ENCODE measurements at regions of chr7 and their contacts with region 1.

Region 1: DNA sequence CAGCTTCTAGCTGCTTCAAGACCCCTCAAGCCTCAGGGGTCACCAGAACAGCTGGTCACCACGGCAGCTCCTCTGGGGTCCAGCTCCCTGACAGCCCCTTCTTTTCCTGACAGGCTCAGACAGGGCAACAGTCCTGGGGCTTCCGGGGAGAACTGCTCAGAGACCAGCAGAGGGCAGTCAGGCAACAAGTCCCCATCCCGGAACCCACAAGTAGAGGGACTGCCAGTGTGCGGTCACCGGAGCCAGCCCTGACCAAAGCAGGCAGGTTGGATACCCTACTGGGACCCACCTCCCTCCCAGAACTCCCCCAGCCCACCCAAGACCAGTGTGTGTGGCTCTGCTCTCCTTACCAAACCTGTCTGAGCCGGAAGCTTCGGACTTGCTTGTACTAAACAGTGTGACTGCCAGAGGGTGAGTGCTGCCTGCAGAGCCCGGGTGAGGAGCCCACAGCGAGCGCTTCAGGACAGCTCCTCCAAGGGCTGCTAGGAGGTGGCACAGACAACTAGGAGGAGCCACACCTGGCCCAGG is 40.3 kb downstream of the YKT6 start:
- DNase-seq: peak in 1 of 2 experiments; percentile 76
- H3K4me3 ChIP-seq: no peak overlapping the region
- H3K27ac ChIP-seq: no peak overlapping the region
- H3K4me1 ChIP-seq: peaks cover 0 to 2% (median 0%) of the 10 kb centered on the region in 4 experiments; a peak in 2 of 7 replicates
- H3K27me3 ChIP-seq: no peaks in the 10 kb centered on the region; a peak in 1 of 7 replicates
- CTCF ChIP-seq: peak in 2 of 3 experiments; percentile 84 to 92; a peak in 3 of 4 replicates
- EP300 ChIP-seq: no peak
- POLR2A ChIP-seq: no peak
- RAD21 ChIP-seq: peak; percentile 81 to 89

Region 2: GRCh38 chr7:44163591-44163990 is 77.5 kb before region 1 on chr7:
- CTCF ChIA-PET with region 1: no interaction called
- POLR2A ChIA-PET with region 1: no interaction called
- DNase-seq: no peak
- H3K4me3 ChIP-seq: no peak overlapping the region
- H3K27ac ChIP-seq: no peak overlapping the region
- H3K4me1 ChIP-seq: peaks cover 2 to 5% (median 4%) of the 10 kb centered on the region in 4 experiments; a peak in 5 of 7 replicates
- H3K27me3 ChIP-seq: no peaks in the 10 kb centered on the region
- CTCF ChIP-seq: no peak
- EP300 ChIP-seq: no peak
- POLR2A ChIP-seq: no peak
- RAD21 ChIP-seq: no peak

Region 3: DNA sequence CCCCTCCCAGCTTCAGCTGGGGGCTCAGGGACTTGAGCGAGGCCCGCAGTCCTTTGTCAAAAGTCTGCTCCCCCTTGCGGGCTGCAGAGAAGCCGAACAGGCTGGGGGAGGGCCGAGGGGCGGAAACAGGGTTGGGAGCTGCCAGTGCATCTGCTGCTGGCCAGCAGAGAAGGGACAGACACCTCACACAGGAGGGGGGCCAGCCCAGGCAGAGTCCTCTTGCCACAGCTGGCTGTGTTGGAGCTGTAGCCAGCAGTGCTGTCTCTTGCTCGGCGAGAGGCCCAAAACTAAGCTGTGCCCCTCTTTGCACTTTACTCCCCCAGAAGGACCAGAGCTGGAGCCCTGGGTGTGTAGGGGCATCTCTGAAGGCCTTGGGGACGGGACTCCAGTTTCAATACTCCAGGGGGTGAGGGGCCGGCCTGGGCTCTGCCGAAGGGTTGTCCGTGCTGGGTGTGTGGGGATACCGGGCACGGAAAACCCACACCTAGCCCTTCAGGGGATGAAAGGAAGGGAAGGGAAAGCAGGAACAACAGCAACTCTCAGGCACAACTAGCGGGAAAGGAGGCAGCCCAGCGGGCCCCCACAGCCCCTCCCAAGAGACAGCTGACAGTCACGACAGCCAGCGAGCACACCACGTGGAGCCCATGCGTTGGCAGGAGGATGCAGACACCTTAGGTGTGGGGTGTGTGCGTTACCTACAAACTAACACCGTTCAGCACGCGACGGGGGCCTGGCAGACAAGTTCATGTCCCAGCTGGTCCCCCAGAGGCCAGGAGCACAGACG is 22.4 kb before region 1 on chr7:
- CTCF ChIA-PET with region 1: interaction called, 19 read pairs
- POLR2A ChIA-PET with region 1: interaction called, 4 read pairs
- DNase-seq: peak; percentile 57 to 79
- H3K4me3 ChIP-seq: peak overlapping the region in 1 of 4 experiments; percentile 19; a peak in 1 of 8 replicates
- H3K27ac ChIP-seq: no peak overlapping the region
- H3K4me1 ChIP-seq: peaks cover 0 to 24% (median 19%) of the 10 kb centered on the region in 4 experiments; a peak in 6 of 7 replicates
- H3K27me3 ChIP-seq: no peaks in the 10 kb centered on the region
- CTCF ChIP-seq: peak in 2 of 3 experiments; percentile 41 to 42; a peak in 2 of 4 replicates
- EP300 ChIP-seq: no peak
- POLR2A ChIP-seq: no peak
- RAD21 ChIP-seq: peak in 1 of 2 experiments; percentile 31; a peak in 3 of 4 replicates

Region 4: DNA sequence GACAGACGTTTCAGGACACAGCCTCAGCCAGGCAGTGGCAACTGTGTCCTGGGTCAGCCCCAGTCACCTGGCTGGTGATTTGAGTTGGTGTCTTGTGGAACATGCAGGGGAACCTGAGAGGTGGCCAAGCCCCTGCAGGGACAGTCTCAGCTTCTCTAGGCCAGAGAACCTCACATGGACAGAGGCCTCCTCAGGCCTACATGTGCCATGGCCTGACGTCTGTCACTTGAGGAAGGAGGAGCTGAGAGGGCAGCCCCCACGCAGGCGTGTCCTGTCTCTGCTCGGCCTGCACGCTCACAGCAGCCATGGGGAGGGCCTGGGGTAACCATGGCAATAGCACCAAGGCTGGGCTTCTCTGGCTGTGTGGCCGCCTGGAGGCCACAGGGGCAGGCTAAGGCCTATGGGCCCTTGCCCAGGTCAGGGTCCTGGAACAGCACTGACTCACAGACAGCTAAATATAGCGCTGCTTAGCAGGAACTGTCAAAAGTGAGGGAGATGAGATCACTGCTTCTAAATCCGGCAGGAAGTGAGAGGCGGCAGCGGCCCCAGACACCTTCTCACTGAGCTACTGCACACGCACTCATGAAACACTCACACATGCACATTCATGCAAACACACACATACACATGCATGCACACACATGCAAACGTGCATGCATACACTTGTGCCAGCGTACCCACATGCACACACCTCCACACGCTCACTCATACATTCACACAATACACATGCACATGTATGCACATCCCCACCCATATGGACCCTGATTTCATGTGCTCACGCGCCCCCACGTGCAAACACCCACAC is 16.8 kb after region 1 on chr7:
- CTCF ChIA-PET with region 1: interaction called, 12 read pairs
- POLR2A ChIA-PET with region 1: interaction called, 3 read pairs
- DNase-seq: no peak
- H3K4me3 ChIP-seq: no peak overlapping the region
- H3K27ac ChIP-seq: no peak overlapping the region
- H3K4me1 ChIP-seq: no peaks in the 10 kb centered on the region
- H3K27me3 ChIP-seq: no peaks in the 10 kb centered on the region
- CTCF ChIP-seq: no peak
- EP300 ChIP-seq: no peak
- POLR2A ChIP-seq: no peak
- RAD21 ChIP-seq: no peak

Region 5: DNA sequence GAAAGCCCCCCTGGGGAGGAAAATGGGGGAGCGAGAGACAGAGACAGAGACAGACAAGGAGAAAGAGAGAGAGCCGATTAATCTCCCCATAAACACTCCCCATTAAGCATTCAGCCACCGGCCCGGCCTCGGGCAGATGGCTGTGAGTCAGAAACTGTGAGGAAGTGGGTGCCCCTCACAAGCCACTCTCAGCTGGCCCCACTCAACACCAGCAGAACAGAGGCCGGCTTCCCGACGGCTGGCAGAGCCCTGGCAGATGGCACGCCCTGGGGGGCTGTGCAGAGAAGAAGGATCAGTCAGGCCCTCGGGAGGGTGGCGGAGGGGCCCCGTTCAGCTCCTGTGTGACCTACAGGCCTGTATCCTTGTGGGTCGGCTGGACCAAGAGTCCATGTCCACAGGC is 43.2 kb after region 1 on chr7:
- CTCF ChIA-PET with region 1: interaction called, 22 read pairs
- POLR2A ChIA-PET with region 1: no interaction called
- DNase-seq: peak in 1 of 2 experiments; percentile 43
- H3K4me3 ChIP-seq: no peak overlapping the region
- H3K27ac ChIP-seq: no peak overlapping the region
- H3K4me1 ChIP-seq: peaks cover 0 to under 1% (median 0%) of the 10 kb centered on the region in 4 experiments; a peak in 1 of 7 replicates
- H3K27me3 ChIP-seq: no peaks in the 10 kb centered on the region
- CTCF ChIP-seq: no peak
- EP300 ChIP-seq: no peak
- POLR2A ChIP-seq: no peak
- RAD21 ChIP-seq: no peak

Region 6: DNA sequence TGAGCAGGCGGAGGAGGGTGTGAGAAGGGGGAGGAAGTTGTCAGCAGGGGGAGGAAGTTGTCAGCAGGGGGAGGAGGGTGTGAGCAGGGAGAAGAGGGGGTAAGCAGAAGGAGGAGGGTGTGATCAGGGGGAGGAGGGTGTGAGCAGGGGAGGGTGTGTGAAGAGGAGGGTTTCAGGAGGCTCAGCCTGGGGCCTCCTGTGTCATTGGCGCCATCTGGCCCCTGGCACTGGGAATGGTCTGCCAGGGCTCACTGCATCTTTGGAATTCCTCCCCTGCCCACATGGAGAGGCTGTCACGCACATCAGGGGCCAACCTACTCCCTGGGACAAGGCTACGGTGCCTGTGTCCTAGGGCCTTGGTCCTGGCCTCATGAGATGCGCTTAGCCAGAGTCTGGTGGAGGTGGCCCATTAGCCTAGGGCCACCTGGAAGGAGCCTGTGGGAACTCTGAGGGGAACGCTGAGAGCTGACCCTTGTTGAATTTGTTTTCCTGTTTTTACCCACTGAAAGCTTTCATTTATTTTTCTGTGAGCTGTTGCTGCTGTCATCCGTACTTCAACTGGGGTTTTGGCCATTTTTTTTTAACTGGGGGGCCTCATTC is 66.4 kb after region 1 on chr7:
- CTCF ChIA-PET with region 1: interaction called, 37 read pairs
- POLR2A ChIA-PET with region 1: no interaction called
- DNase-seq: peak in 1 of 2 experiments; percentile 49
- H3K4me3 ChIP-seq: no peak overlapping the region
- H3K27ac ChIP-seq: no peak overlapping the region
- H3K4me1 ChIP-seq: peaks cover 0 to 8% (median 6%) of the 10 kb centered on the region in 4 experiments; a peak in 4 of 7 replicates
- H3K27me3 ChIP-seq: peaks cover 14 to 31% (median 28%) of the 10 kb centered on the region in 4 experiments; a peak in 6 of 7 replicates
- CTCF ChIP-seq: peak; percentile 59 to 76 (median 60)
- EP300 ChIP-seq: no peak
- POLR2A ChIP-seq: no peak
- RAD21 ChIP-seq: peak; percentile 66 to 71

Region 7: DNA sequence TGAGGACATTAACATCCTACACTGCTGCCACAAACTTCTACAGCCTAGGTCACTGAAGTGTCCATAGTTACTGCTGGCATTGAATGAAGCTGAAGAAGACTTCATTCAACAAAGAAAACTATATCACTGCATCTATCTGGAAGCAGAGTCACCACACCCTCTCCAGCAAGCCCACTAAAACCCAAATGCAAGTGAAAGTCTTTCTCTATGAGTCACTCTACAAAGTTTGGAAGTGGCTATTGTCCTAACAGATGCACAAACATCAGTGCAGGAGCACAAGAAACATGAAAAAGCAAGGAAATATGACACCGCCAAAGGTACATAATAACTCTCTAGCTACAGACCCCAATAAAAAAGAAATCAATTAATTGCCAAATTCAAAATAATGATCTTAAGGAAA is 127.8 kb after region 1 on chr7:
- CTCF ChIA-PET with region 1: interaction called, 13 read pairs
- POLR2A ChIA-PET with region 1: no interaction called
- DNase-seq: no peak
- H3K4me3 ChIP-seq: no peak overlapping the region
- H3K27ac ChIP-seq: no peak overlapping the region
- H3K4me1 ChIP-seq: no peaks in the 10 kb centered on the region
- H3K27me3 ChIP-seq: no peaks in the 10 kb centered on the region; a peak in 2 of 7 replicates
- CTCF ChIP-seq: no peak
- EP300 ChIP-seq: no peak
- POLR2A ChIP-seq: no peak
- RAD21 ChIP-seq: no peak